ENCODE measurements at regions of chr2 and their contacts with region 1.

Region 1: DNA sequence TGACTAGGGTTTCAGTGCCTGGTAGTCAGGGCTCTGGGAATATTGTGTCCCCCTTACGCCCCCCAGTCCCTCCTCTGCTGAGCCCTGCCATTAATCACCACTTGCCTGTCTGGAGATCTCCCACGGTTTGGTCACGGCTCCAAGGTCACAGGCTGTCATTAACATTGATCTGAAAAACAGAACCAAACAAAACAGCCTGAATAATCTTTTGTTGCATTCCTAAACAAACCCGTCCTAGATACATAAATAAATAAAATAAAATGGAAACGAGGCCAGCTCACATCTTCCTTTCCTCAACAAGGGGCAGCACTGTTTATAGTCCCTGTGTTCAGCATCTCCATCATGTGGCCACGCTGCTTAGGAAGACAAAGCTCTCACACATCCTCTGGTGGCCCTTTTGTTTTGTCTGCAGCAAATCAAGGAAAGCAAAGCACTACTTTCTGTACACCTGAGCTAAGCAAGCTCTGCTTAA is 282.8 kb downstream of the AGPS start:
- DNase-seq: no peak
- H3K4me3 ChIP-seq: no peak overlapping the region
- H3K27ac ChIP-seq: no peak overlapping the region
- H3K4me1 ChIP-seq: peaks cover 6% of the 10 kb centered on the region
- H3K27me3 ChIP-seq: no peaks in the 10 kb centered on the region
- CTCF ChIP-seq: no peak

Region 2: GRCh38 chr2:177467646-177468045 is 207.7 kb before region 1 on chr2:
- CTCF ChIA-PET with region 1: no interaction called
- POLR2A ChIA-PET with region 1: no interaction called
- intact Hi-C with region 1: no loop called
- DNase-seq: no peak
- H3K4me3 ChIP-seq: no peak overlapping the region
- H3K27ac ChIP-seq: no peak overlapping the region
- H3K4me1 ChIP-seq: no peaks in the 10 kb centered on the region
- H3K27me3 ChIP-seq: no peaks in the 10 kb centered on the region
- CTCF ChIP-seq: no peak

Region 3: DNA sequence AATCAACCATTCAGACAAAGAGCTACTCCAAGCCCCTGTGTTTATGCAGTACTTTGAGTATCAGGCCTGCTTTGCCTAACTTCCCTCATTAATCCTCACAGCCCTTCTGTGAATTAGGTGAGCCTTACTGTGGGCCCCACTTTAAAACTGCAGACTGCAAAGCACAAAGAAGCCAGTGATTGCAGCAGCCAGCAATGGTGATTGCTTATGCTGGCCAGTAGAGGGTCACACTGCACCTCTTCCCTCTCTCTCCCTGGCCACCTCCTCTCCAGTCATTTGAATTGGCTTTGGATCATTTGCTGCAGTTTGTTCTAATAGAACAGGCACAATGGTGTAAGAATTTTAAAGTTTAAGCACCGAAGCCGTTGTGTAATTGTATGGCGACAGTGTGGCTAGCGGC is 52.9 kb before region 1 on chr2:
- CTCF ChIA-PET with region 1: no interaction called
- POLR2A ChIA-PET with region 1: no interaction called
- intact Hi-C with region 1: loop called (anchors 5 kb)
- DNase-seq: peak; percentile 73
- H3K4me3 ChIP-seq: peak overlapping the region; percentile 15
- H3K27ac ChIP-seq: peak overlapping the region; percentile 56
- H3K4me1 ChIP-seq: peaks cover 25% of the 10 kb centered on the region
- H3K27me3 ChIP-seq: no peaks in the 10 kb centered on the region
- CTCF ChIP-seq: peak; percentile 66

Region 4: GRCh38 chr2:177698281-177698680 is 22.9 kb after region 1 on chr2:
- CTCF ChIA-PET with region 1: no interaction called
- POLR2A ChIA-PET with region 1: no interaction called
- intact Hi-C with region 1: no loop called
- DNase-seq: no peak
- H3K4me3 ChIP-seq: no peak overlapping the region
- H3K27ac ChIP-seq: no peak overlapping the region
- H3K4me1 ChIP-seq: no peaks in the 10 kb centered on the region
- H3K27me3 ChIP-seq: no peaks in the 10 kb centered on the region
- CTCF ChIP-seq: no peak

Region 5: GRCh38 chr2:178223806-178224205 is 548.4 kb after region 1 on chr2:
- CTCF ChIA-PET with region 1: no interaction called
- POLR2A ChIA-PET with region 1: no interaction called
- intact Hi-C with region 1: no loop called
- DNase-seq: no peak
- H3K4me3 ChIP-seq: no peak overlapping the region
- H3K27ac ChIP-seq: no peak overlapping the region
- H3K4me1 ChIP-seq: peaks cover 5% of the 10 kb centered on the region
- H3K27me3 ChIP-seq: no peaks in the 10 kb centered on the region
- CTCF ChIP-seq: no peak